CD14-positive monocyte (primary cell): ENCODE measurements at regions of chr11 and their contacts with region 1.

Region 1: GRCh38 chr11:130861902-130862860 is 54.1 kb downstream of the SNX19 start:
- DNase-seq: peak; percentile 85 to 89 (median 88)
- H3K4me3 ChIP-seq: no peak overlapping the region
- H3K4me3 Mint-ChIP-seq: no peak overlapping the region
- H3K27ac ChIP-seq: no peak overlapping the region
- H3K27ac Mint-ChIP-seq: peak overlapping the region in 2 of 7 donors; percentile 13 to 83
- H3K4me1 ChIP-seq: no peaks in the 10 kb centered on the region
- H3K4me1 Mint-ChIP-seq: peaks cover 2% of the 10 kb centered on the region
- H3K27me3 ChIP-seq: no peaks in the 10 kb centered on the region
- H3K27me3 Mint-ChIP-seq: peaks cover 0 to 2% (median 0%) of the 10 kb centered on the region in 3 donors
- CTCF ChIP-seq: peak; percentile 100

Region 2: GRCh38 chr11:130213143-130213978 is 648.8 kb before region 1 on chr11:
- intact Hi-C with region 1: loop called in 1 of 2 experiments (anchors 5 kb)
- DNase-seq: peak; percentile 32 to 52 (median 51)
- H3K4me3 ChIP-seq: peak overlapping the region in 1 of 3 experiments; percentile 30
- H3K4me3 Mint-ChIP-seq: peak overlapping the region in 1 of 2 donors; percentile 53
- H3K27ac ChIP-seq: no peak overlapping the region
- H3K27ac Mint-ChIP-seq: no peak overlapping the region
- H3K4me1 ChIP-seq: peaks cover 3 to 6% of the 10 kb centered on the region in 2 donors
- H3K4me1 Mint-ChIP-seq: peaks cover 2% of the 10 kb centered on the region
- H3K27me3 ChIP-seq: no peaks in the 10 kb centered on the region
- H3K27me3 Mint-ChIP-seq: peaks cover 1 to 5% (median 3%) of the 10 kb centered on the region in 3 donors
- CTCF ChIP-seq: peak; percentile 99

Region 3: DNA sequence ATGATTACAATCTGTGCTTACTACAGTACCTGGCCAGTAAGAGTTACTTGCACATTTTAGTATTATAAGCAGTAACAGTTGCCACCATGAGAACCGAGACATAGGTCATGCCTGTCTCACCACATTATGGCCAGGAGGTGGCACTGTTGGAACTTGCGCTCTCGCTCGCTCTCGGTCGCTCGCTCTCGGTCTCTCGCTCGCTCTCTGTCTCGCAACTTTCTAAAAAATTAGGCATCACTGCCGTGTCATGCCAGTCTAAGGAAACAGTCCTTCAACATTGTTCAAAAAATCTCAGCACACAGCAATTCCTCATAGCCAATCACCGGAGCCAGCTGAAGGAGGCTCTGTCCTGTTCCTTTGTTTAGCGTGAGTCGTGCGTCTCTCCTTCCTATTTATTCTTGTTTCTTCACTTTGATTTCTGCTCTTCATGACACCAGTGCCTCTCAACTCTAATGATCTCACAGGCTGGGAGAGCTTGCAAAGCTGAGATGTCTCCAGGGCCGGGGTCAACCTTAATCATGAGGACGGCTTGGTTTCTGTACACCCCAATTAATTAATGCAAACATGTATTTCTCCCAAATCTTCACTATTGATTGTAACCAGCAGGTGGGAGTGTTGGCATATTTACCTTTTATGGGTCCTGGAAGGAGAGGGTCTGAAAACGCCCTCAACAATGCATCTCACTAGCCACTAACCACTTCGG is 427.5 kb before region 1 on chr11:
- intact Hi-C with region 1: loop called (anchors 1 to 2 kb)
- DNase-seq: peak; percentile 55 to 72 (median 70)
- H3K4me3 ChIP-seq: peak overlapping the region; percentile 45 to 98 (median 93)
- H3K4me3 Mint-ChIP-seq: no peak overlapping the region
- H3K27ac ChIP-seq: peak overlapping the region in 1 of 2 donors; percentile 10
- H3K27ac Mint-ChIP-seq: no peak overlapping the region
- H3K4me1 ChIP-seq: no peaks in the 10 kb centered on the region
- H3K4me1 Mint-ChIP-seq: peaks cover 11% of the 10 kb centered on the region
- H3K27me3 ChIP-seq: peaks cover 11 to 17% of the 10 kb centered on the region in 2 donors
- H3K27me3 Mint-ChIP-seq: peaks cover 22 to 30% (median 24%) of the 10 kb centered on the region in 3 donors
- CTCF ChIP-seq: peak; percentile 89

Region 4: GRCh38 chr11:130827451-130828377 is 34.5 kb before region 1 on chr11:
- intact Hi-C with region 1: no loop called
- DNase-seq: no peak
- H3K4me3 ChIP-seq: no peak overlapping the region
- H3K4me3 Mint-ChIP-seq: no peak overlapping the region
- H3K27ac ChIP-seq: no peak overlapping the region
- H3K27ac Mint-ChIP-seq: no peak overlapping the region
- H3K4me1 ChIP-seq: no peaks in the 10 kb centered on the region
- H3K4me1 Mint-ChIP-seq: no peaks in the 10 kb centered on the region
- H3K27me3 ChIP-seq: no peaks in the 10 kb centered on the region
- H3K27me3 Mint-ChIP-seq: peaks cover 5 to 7% (median 6%) of the 10 kb centered on the region in 3 donors
- CTCF ChIP-seq: no peak